ENCODE measurements at regions of chr3 and their contacts with region 1.

Region 1: DNA sequence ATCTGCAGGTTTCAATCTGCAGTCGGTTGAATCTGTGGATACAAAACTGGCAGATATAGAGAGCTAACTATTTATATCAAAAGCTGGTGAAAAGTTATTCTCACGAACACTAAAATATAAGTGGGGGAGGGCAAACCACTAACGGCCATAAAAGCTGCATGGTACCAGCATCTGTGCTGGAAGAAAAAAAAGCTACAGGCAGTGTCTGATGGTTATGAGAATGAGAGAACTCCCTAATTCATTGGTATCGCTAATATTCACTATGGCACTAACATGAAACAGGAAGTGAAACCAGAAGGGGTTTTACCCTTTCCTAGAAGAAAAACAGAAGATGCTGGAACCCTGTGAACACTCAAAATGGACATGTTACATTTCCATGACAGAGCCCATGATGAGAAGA is 15.9 kb downstream of the CEP70 start:
- DNase-seq: no peak
- H3K4me3 Mint-ChIP-seq: peak overlapping the region; percentile 39
- H3K27ac Mint-ChIP-seq: no peak overlapping the region
- H3K4me1 Mint-ChIP-seq: peaks cover 23% of the 10 kb centered on the region
- H3K27me3 Mint-ChIP-seq: no peaks in the 10 kb centered on the region

Region 2: DNA sequence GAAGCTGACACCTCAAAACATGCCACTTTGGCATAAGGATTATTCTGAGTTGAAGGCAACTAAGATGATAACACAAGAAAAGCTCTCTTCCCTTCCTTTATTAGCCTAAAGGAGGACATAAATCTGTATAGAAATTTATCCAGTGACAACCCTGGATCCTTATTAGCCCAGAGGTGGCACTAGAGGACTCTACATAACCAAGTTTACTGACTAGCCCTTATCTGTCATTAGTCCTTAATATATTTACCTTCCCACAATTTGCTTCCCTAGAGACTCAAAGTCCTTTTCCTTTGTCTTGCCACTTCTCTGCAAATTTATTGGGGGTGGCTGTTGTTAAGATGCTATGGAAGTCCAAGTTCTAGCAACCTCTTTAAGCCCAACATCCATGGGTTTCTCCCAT is 10.7 kb before region 1 on chr3:
- intact Hi-C with region 1: loop called (anchors 1 kb)
- DNase-seq: no peak
- H3K4me3 Mint-ChIP-seq: no peak overlapping the region
- H3K27ac Mint-ChIP-seq: no peak overlapping the region
- H3K4me1 Mint-ChIP-seq: peaks cover 16% of the 10 kb centered on the region
- H3K27me3 Mint-ChIP-seq: no peaks in the 10 kb centered on the region